Caco-2 (cell line): ENCODE measurements at regions of chr13 and their contacts with region 1.

Region 1: GRCh38 chr13:41942462-41943094 is 18.3 kb downstream of the VWA8 start:
- DNase-seq: peak; percentile 50 to 58
- H3K4me3 ChIP-seq: no peak overlapping the region
- H3K4me3 Mint-ChIP-seq: no peak overlapping the region
- H3K27ac Mint-ChIP-seq: no peak overlapping the region
- H3K4me1 ChIP-seq: peaks cover 10% of the 10 kb centered on the region
- H3K4me1 Mint-ChIP-seq: peaks cover 16% of the 10 kb centered on the region
- H3K27me3 ChIP-seq: no peaks in the 10 kb centered on the region
- H3K27me3 Mint-ChIP-seq: no peaks in the 10 kb centered on the region
- CTCF ChIP-seq: peak; percentile 25 to 55

Region 2: GRCh38 chr13:41694545-41695301 is 247.9 kb before region 1 on chr13:
- CTCF ChIA-PET with region 1: interaction called, 3 read pairs
- POLR2A ChIA-PET with region 1: no interaction called
- intact Hi-C with region 1: loop called (anchors 10 kb)
- DNase-seq: peak in 1 of 2 experiments; percentile 42
- H3K4me3 ChIP-seq: no peak overlapping the region
- H3K4me3 Mint-ChIP-seq: peak overlapping the region; percentile 54
- H3K27ac Mint-ChIP-seq: peak overlapping the region; percentile 94
- H3K4me1 ChIP-seq: peaks cover 57% of the 10 kb centered on the region
- H3K4me1 Mint-ChIP-seq: peaks cover 40% of the 10 kb centered on the region
- H3K27me3 ChIP-seq: no peaks in the 10 kb centered on the region
- H3K27me3 Mint-ChIP-seq: no peaks in the 10 kb centered on the region
- CTCF ChIP-seq: no peak

Region 3: GRCh38 chr13:41854758-41855157 is 87.8 kb before region 1 on chr13:
- CTCF ChIA-PET with region 1: no interaction called
- POLR2A ChIA-PET with region 1: no interaction called
- intact Hi-C with region 1: no loop called
- DNase-seq: no peak
- H3K4me3 ChIP-seq: no peak overlapping the region
- H3K4me3 Mint-ChIP-seq: no peak overlapping the region
- H3K27ac Mint-ChIP-seq: no peak overlapping the region
- H3K4me1 ChIP-seq: no peaks in the 10 kb centered on the region
- H3K4me1 Mint-ChIP-seq: no peaks in the 10 kb centered on the region
- H3K27me3 ChIP-seq: no peaks in the 10 kb centered on the region
- H3K27me3 Mint-ChIP-seq: no peaks in the 10 kb centered on the region
- CTCF ChIP-seq: no peak

Region 4: GRCh38 chr13:41891119-41891518 is 51.5 kb before region 1 on chr13:
- CTCF ChIA-PET with region 1: no interaction called
- POLR2A ChIA-PET with region 1: no interaction called
- intact Hi-C with region 1: no loop called
- DNase-seq: no peak
- H3K4me3 ChIP-seq: no peak overlapping the region
- H3K4me3 Mint-ChIP-seq: no peak overlapping the region
- H3K27ac Mint-ChIP-seq: no peak overlapping the region
- H3K4me1 ChIP-seq: no peaks in the 10 kb centered on the region
- H3K4me1 Mint-ChIP-seq: peaks cover 7% of the 10 kb centered on the region
- H3K27me3 ChIP-seq: no peaks in the 10 kb centered on the region
- H3K27me3 Mint-ChIP-seq: no peaks in the 10 kb centered on the region
- CTCF ChIP-seq: no peak

Region 5: DNA sequence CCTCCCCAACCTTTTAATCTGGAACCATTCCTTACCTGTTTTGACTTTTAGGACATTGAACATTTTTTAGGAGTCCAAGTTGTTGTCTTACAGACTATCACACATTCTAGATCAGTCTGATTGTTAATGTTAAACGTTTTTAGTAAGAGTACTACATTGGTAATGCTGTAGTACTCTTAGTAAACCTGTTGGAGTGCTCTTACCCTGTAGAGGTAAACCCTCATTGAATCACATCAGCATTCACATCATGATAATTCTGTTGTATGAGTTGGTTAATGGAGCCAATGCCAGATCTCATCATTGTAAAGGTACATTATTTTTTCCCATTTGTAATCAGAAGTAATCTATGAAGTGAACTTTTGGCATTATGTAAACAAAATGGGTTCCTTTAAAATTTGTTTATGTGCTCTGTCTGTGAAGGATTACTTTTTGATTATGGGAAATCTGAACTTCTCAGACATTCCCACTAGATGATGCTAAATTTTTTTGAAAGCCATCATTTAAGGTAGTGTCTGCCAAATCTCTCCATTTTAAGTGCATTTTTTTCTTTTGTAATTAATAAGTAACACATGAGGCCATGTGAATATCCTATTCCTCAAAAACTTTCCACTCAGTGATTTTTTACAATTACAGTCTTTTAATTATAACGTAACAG is 36.9 kb before region 1 on chr13:
- CTCF ChIA-PET with region 1: no interaction called
- POLR2A ChIA-PET with region 1: no interaction called
- intact Hi-C with region 1: loop called (anchors 1 kb)
- DNase-seq: peak in 1 of 2 experiments; percentile 31
- H3K4me3 ChIP-seq: no peak overlapping the region
- H3K4me3 Mint-ChIP-seq: no peak overlapping the region
- H3K27ac Mint-ChIP-seq: no peak overlapping the region
- H3K4me1 ChIP-seq: no peaks in the 10 kb centered on the region
- H3K4me1 Mint-ChIP-seq: no peaks in the 10 kb centered on the region
- H3K27me3 ChIP-seq: no peaks in the 10 kb centered on the region
- H3K27me3 Mint-ChIP-seq: no peaks in the 10 kb centered on the region
- CTCF ChIP-seq: peak; percentile 65 to 79

Region 6: GRCh38 chr13:41960639-41961465 is 18.3 kb after region 1 on chr13 and contains the start of gene VWA8:
- CTCF ChIA-PET with region 1: interaction called, 4 read pairs
- POLR2A ChIA-PET with region 1: interaction called, 4 read pairs
- intact Hi-C with region 1: loop called (anchors 1 kb)
- DNase-seq: peak; percentile 85 to 90
- H3K4me3 ChIP-seq: peak within 1 kb of the TSS; percentile 78
- H3K4me3 Mint-ChIP-seq: peak within 1 kb of the TSS; percentile 88
- H3K27ac Mint-ChIP-seq: peak within 1 kb of the TSS; percentile 84
- H3K4me1 ChIP-seq: peaks cover 11% of the 10 kb centered on the region; the same call in 1 of the 2 replicates
- H3K4me1 Mint-ChIP-seq: peaks cover 14% of the 10 kb centered on the region
- H3K27me3 ChIP-seq: no peaks in the 10 kb centered on the region
- H3K27me3 Mint-ChIP-seq: no peaks in the 10 kb centered on the region
- CTCF ChIP-seq: no peak
- total RNA-seq, gene VWA8: 20.7 and 20.9 TPM in 2 replicates

Region 7: GRCh38 chr13:42215578-42216421 is 273.2 kb after region 1 on chr13:
- CTCF ChIA-PET with region 1: no interaction called
- POLR2A ChIA-PET with region 1: no interaction called
- intact Hi-C with region 1: no loop called
- DNase-seq: peak; percentile 45 to 55
- H3K4me3 ChIP-seq: no peak overlapping the region
- H3K4me3 Mint-ChIP-seq: no peak overlapping the region
- H3K27ac Mint-ChIP-seq: no peak overlapping the region
- H3K4me1 ChIP-seq: no peaks in the 10 kb centered on the region
- H3K4me1 Mint-ChIP-seq: peaks cover 6% of the 10 kb centered on the region
- H3K27me3 ChIP-seq: no peaks in the 10 kb centered on the region
- H3K27me3 Mint-ChIP-seq: no peaks in the 10 kb centered on the region
- CTCF ChIP-seq: peak; percentile 41 to 65